ENCODE measurements at regions of chr5 and their contacts with region 1.

Region 1: GRCh38 chr5:172697123-172698121 is 56.4 kb downstream of the NEURL1B start:
- DNase-seq: peak; percentile 89
- H3K27ac ChIP-seq: peak overlapping the region; percentile 64
- CTCF ChIP-seq: peak; percentile 95

Region 2: DNA sequence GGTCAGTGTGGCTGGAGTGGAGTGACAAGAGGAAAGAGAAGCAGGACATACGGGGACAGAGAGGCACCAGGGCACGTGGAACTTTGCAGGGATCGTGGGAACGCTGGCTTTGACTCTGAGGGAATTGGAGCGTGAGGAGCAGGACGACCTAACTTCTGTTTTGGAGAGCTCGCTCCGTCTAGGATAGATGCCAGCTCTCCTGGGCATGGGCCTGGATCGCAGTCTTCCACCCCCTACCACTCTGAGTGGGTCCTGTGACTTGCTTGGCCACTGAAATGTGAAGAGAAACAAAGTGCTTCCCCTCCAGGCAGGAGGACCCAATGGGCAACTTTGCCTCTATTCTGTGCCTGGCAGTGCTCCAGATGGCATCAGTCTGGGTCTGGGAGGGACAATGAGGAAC is 234.4 kb before region 1 on chr5:
- CTCF ChIA-PET with region 1: interaction called, 11 read pairs
- POLR2A ChIA-PET with region 1: no interaction called
- DNase-seq: no peak
- H3K27ac ChIP-seq: no peak overlapping the region
- CTCF ChIP-seq: no peak

Region 3: DNA sequence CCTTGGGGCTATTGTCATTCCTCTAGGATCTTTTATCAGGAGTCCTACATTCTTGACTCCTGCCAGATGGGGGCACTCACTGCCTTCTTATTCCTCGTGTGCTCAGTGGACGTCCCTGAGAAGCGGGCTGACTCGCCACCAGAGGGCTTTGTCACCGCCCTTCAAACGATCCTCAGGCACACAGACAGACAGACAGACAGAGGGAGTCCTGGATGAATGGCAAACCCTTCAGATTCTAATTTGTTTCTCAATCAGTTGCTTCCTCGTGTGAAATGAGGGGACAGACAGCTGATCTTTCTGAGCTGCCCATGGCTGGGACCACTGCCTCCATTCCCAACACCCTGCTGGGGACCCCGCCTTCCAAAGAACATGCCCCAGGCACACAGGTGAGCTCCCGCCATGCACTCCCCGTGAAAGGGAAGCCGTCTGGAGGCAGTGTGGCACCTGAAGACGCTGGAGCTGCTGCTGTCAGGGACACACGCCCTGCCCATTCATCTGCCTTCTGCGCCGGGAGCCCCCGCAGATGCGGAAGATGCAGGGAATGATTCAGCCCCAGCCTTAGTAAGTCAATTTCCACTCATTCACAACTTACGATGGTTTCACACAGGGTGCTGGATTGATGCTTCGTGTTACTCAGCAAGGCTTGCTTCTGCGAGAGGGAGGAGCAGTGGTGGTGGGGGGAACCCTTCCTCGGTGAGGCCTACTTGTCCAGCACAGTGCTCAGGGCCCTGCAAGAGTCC is 218.2 kb before region 1 on chr5:
- CTCF ChIA-PET with region 1: interaction called, 63 read pairs
- POLR2A ChIA-PET with region 1: no interaction called
- DNase-seq: peak; percentile 95
- H3K27ac ChIP-seq: no peak overlapping the region
- CTCF ChIP-seq: peak; percentile 88

Region 4: DNA sequence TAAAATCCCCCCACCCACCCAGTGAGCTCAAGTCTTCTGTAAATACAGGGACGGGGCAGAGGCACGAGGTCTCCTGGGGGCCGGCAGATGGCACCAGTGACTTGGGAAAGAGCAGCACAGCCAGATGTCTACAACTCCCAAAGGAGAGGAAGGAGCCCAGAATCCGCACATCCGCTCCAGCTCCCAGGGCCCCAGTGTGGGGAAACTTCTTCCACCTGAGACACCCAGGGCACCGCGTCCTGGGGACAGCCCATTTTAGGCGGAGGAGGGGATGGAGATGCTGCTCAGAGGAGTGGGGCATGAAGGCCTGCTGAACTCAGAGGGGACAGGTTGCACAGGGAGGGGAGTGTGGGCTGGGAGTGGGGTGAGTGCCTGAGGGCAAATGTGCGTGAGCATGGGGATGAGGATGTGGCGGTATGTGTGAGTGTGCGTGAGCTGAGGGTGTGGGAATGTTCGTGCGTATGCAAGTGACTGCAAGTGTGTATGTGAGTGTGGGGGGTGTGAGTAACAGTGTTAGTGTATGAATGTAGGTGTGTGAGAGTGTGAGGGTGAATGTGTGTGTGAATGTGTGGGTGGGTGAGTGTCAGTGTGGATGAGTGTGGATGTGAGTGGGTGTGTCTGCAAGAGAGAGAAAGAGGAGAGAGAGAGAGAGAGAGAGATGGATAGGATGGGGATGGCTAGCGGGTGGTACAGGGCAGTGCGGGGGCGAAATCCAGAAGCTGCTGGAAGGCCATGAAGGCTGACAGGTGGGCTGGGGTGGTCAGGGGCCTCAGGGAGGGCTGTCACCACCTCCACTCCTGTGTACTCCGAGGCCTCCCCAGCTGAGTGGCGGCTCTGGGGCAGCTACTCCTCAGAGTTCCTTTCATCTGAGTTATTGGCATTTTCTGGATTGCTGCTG is 10.1 kb after region 1 on chr5:
- CTCF ChIA-PET with region 1: interaction called, 21 read pairs
- POLR2A ChIA-PET with region 1: no interaction called
- DNase-seq: peak; percentile 72
- H3K27ac ChIP-seq: no peak overlapping the region
- CTCF ChIP-seq: peak; percentile 86

Region 5: GRCh38 chr5:173293817-173294672 is 596.6 kb after region 1 on chr5:
- CTCF ChIA-PET with region 1: no interaction called
- POLR2A ChIA-PET with region 1: no interaction called
- DNase-seq: peak; percentile 88
- H3K27ac ChIP-seq: no peak overlapping the region
- CTCF ChIP-seq: peak; percentile 93

Measured in RWPE1 (cell line).